Activated B cell treated with CpG ODN at 0.5 μM for 24 hours (primary cell): ENCODE measurements at regions of chr16 and their contacts with region 1.

Region 1: GRCh38 chr16:85759631-85760419 is 8.9 kb upstream of the C16orf74 start:
- DNase-seq: peak; percentile 53
- ATAC-seq: no peak
- H3K4me3 Mint-ChIP-seq: peak overlapping the region; percentile 44
- H3K27ac Mint-ChIP-seq: peak overlapping the region; percentile 100
- H3K4me1 Mint-ChIP-seq: peaks cover 77% of the 10 kb centered on the region
- H3K27me3 Mint-ChIP-seq: no peaks in the 10 kb centered on the region
- CTCF ChIP-seq: no peak

Region 2: GRCh38 chr16:85615852-85616606 is 143.8 kb before region 1 on chr16:
- CTCF ChIA-PET with region 1: no interaction called
- POLR2A ChIA-PET with region 1: interaction called, 3 read pairs
- intact Hi-C with region 1: loop called (anchors 1 kb)
- DNase-seq: peak; percentile 75
- ATAC-seq: peak; percentile 60
- H3K4me3 Mint-ChIP-seq: peak overlapping the region; percentile 76
- H3K27ac Mint-ChIP-seq: peak overlapping the region; percentile 72
- H3K4me1 Mint-ChIP-seq: peaks cover 47% of the 10 kb centered on the region
- H3K27me3 Mint-ChIP-seq: no peaks in the 10 kb centered on the region
- CTCF ChIP-seq: no peak

Region 3: GRCh38 chr16:85688586-85689284 is 71.1 kb before region 1 on chr16 and contains the start of gene GINS2:
- CTCF ChIA-PET with region 1: interaction called, 4 read pairs
- POLR2A ChIA-PET with region 1: interaction called, 4 read pairs
- intact Hi-C with region 1: loop called (anchors 2 kb)
- DNase-seq: peak; percentile 78
- ATAC-seq: peak; percentile 100
- H3K4me3 Mint-ChIP-seq: peak within 1 kb of the TSS; percentile 78
- H3K27ac Mint-ChIP-seq: no peak within 1 kb of the TSS
- H3K4me1 Mint-ChIP-seq: peaks cover 24% of the 10 kb centered on the region
- H3K27me3 Mint-ChIP-seq: no peaks in the 10 kb centered on the region
- CTCF ChIP-seq: no peak
- total RNA-seq, gene GINS2: 6.0 and 6.8 TPM in 2 replicates

Region 4: GRCh38 chr16:85799497-85800337 is 39.9 kb after region 1 on chr16 and contains the starts of genes COX4I1 and EMC8:
- CTCF ChIA-PET with region 1: no interaction called
- POLR2A ChIA-PET with region 1: interaction called, 23 read pairs
- intact Hi-C with region 1: loop called (anchors 1 kb)
- DNase-seq: peak; percentile 89
- ATAC-seq: peak; percentile 89
- H3K4me3 Mint-ChIP-seq: peak within 1 kb of the TSS; percentile 90
- H3K27ac Mint-ChIP-seq: peak within 1 kb of the TSS; percentile 84
- H3K4me1 Mint-ChIP-seq: peaks cover 53% of the 10 kb centered on the region
- H3K27me3 Mint-ChIP-seq: no peaks in the 10 kb centered on the region
- CTCF ChIP-seq: no peak
- total RNA-seq, gene COX4I1: 578 TPM in 2 replicates
- total RNA-seq, gene EMC8: 27.8 and 29.0 TPM in 2 replicates

Region 5: GRCh38 chr16:85947230-85948137 is 187.7 kb after region 1 on chr16:
- CTCF ChIA-PET with region 1: no interaction called
- POLR2A ChIA-PET with region 1: interaction called, 10 read pairs
- intact Hi-C with region 1: loop called (anchors 5 kb)
- DNase-seq: peak; percentile 51
- ATAC-seq: peak; percentile 79
- H3K4me3 Mint-ChIP-seq: peak overlapping the region; percentile 84
- H3K27ac Mint-ChIP-seq: peak overlapping the region; percentile 93
- H3K4me1 Mint-ChIP-seq: peaks cover 91% of the 10 kb centered on the region
- H3K27me3 Mint-ChIP-seq: no peaks in the 10 kb centered on the region
- CTCF ChIP-seq: no peak